ENCODE measurements at regions of chr19 and their contacts with region 1.

Region 1: GRCh38 chr19:12736995-12737834 is at the start of gene GET3:
- DNase-seq: peak; percentile 75
- H3K4me3 Mint-ChIP-seq: peak within 1 kb of the TSS; percentile 99
- H3K27ac Mint-ChIP-seq: peak within 1 kb of the TSS; percentile 83
- H3K4me1 Mint-ChIP-seq: peaks cover 28% of the 10 kb centered on the region
- H3K27me3 Mint-ChIP-seq: no peaks in the 10 kb centered on the region
- total RNA-seq, gene GET3: 68.0 and 70.9 TPM in 2 replicates

Region 2: DNA sequence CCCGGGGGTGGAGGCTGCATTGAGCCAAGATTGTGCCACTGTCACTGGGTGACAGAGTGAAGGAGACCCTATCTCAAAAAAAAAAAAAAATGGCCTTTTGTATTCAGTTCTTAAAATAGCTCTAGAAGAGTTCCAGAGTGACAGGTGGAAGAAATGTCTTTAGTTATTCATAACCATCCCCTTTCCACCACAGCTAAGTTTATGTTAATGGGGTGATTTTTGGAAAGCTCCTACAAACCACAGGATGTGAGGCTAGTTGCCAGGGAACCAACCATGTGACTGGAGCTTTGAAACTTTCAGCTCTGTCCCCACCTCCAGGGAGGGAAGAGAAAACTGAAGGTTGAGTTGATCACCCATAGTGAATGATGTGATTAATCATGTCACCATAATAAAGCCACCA is 133.5 kb before region 1 on chr19:
- intact Hi-C with region 1: loop called (anchors 2 kb)
- DNase-seq: peak; percentile 64
- H3K4me3 Mint-ChIP-seq: no peak overlapping the region
- H3K27ac Mint-ChIP-seq: peak overlapping the region; percentile 67
- H3K4me1 Mint-ChIP-seq: peaks cover 11% of the 10 kb centered on the region
- H3K27me3 Mint-ChIP-seq: no peaks in the 10 kb centered on the region

Region 3: GRCh38 chr19:12696366-12697335 is 40.6 kb before region 1 on chr19 and contains the start of gene FBXW9:
- intact Hi-C with region 1: loop called (anchors 1 kb)
- DNase-seq: peak; percentile 94
- H3K4me3 Mint-ChIP-seq: peak within 1 kb of the TSS; percentile 89
- H3K27ac Mint-ChIP-seq: peak within 1 kb of the TSS; percentile 93
- H3K4me1 Mint-ChIP-seq: peaks cover 11% of the 10 kb centered on the region
- H3K27me3 Mint-ChIP-seq: no peaks in the 10 kb centered on the region
- total RNA-seq, gene FBXW9: 11.8 and 12.2 TPM in 2 replicates

Region 4: DNA sequence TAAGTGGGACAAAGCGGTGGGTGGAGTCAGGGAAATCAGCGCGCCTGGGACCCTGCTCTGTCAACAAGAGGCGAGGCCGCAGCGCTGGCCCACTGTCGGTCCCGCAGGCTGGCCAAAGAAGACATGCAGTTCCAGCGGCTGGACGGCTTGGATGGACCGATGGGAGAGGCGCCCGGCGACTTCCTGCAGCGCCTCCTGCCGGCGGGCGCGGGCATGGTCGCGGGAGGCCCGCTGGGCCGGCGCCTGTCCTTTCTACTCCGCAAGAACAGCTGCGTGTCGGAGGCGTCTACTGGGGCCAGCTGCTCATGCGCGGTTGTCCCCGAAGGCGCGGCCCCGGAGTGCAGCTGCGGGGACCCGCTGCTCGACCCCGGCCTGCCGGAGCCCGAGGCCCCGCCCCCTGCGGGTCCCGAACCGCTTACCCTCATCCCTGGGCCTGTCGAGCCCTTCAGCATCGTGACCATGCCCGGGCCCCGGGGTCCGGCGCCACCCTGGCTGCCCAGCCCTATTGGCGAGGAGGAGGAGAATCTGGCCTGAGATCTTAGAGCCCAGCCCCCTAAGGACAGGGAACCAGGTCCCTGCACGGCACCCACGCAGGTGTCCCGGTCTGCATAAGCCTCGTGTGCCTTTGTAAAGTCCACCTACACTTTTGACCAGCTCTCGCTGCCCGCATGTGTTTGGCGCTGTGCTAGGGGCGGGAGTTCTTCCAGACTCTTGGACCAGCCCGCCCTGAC is 20.5 kb after region 1 on chr19:
- intact Hi-C with region 1: loop called (anchors 1 kb)
- DNase-seq: peak; percentile 68
- H3K4me3 Mint-ChIP-seq: peak overlapping the region; percentile 53
- H3K27ac Mint-ChIP-seq: no peak overlapping the region
- H3K4me1 Mint-ChIP-seq: peaks cover 5% of the 10 kb centered on the region
- H3K27me3 Mint-ChIP-seq: peaks cover 8% of the 10 kb centered on the region

Region 5: DNA sequence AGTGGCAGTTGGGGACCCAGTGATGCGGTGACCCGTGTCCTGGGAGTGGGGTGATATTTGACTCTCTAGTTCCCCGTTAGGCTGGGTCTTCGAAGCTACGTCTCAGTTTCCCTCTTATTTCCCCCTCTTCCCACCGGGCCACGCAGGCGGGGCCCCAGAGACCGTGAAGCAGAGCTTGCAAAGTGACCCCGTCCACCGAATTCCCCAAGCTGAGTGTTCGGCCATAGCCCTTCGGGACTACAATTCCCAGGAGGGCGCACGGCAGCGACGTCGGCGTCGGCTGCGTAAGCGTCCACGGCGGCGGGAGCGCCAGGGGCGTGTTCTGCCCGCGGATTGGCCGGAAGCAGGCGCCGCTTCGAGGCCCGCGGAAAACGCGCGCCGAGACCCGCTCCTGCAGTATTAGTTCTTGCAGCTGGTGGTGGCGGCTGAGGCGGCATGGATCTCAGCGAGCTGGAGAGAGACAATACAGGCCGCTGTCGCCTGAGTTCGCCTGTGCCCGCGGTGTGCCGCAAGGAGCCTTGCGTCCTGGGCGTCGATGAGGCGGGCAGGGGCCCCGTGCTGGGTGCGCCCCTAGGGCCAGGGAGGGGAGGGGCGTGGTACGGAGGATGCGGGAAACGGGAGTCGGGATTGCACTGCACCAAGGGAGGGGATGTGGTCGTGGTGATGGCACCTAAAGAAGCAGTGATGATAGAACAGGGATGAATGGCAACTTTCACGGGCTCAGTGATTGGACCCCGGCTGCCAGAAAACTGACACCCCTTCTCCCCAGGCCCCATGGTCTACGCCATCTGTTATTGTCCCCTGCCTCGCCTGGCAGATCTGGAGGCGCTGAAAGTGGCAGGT is 69.2 kb after region 1 on chr19 and contains the start of gene RNASEH2A:
- intact Hi-C with region 1: loop called (anchors 1 kb)
- DNase-seq: peak; percentile 89
- H3K4me3 Mint-ChIP-seq: peak within 1 kb of the TSS; percentile 96
- H3K27ac Mint-ChIP-seq: peak within 1 kb of the TSS; percentile 89
- H3K4me1 Mint-ChIP-seq: peaks cover 17% of the 10 kb centered on the region
- H3K27me3 Mint-ChIP-seq: no peaks in the 10 kb centered on the region
- total RNA-seq, gene RNASEH2A: 36.1 and 37.5 TPM in 2 replicates

Region 6: DNA sequence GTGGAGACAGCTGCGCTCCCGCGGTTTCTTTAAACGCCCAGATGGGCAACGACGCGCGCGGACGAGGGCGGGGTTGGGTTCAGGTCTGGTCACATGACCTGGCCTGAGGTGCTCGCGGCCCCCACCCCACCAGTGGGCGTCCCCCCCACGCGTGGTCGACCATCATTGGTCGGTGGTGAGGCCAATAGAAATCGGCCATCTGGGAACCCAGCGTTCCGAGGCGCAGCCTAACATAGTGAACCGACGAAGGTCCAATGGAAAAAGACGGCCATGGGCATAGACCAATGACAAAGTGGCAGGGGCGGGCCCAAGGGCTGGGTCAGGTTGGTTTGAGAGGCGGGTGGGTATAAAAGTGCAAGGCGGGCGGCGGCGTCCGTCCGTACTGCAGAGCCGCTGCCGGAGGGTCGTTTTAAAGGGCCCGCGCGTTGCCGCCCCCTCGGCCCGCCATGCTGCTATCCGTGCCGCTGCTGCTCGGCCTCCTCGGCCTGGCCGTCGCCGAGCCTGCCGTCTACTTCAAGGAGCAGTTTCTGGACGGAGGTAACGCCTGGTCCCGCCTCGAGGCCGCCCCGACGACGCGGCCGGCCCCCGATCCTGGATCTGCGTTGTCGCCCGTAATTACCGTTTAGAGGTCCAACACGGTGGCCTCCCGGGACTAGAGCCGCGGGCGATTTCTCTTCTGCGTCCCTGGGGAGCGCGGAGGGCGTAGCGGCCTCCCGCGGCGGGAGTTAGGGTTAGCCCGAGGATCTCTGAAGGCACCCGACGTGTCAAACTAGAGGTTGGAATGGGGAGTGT is 201.2 kb after region 1 on chr19 and contains the start of gene CALR:
- intact Hi-C with region 1: loop called (anchors 1 kb)
- DNase-seq: peak; percentile 100
- H3K4me3 Mint-ChIP-seq: peak within 1 kb of the TSS; percentile 100
- H3K27ac Mint-ChIP-seq: peak within 1 kb of the TSS; percentile 94
- H3K4me1 Mint-ChIP-seq: peaks cover 51% of the 10 kb centered on the region
- H3K27me3 Mint-ChIP-seq: no peaks in the 10 kb centered on the region
- total RNA-seq, gene CALR: 913 and 933 TPM in 2 replicates

Measured in activated T-helper 1 cell treated with anti-CD3 and anti-CD28 coated beads, Interleukin-12 subunit alpha, Interleukin-12 subunit beta, Interleukin-2, Interleukin-4 antibody, amounts not matched to agents 30 ng/mL and 10 ng/mL and 1 ng/mL, durations not matched to agents 14 hours and 24 hours and 36 hours (primary cell).